ENCODE measurements at regions of chr11 and their contacts with region 1.

Region 1: GRCh38 chr11:62665075-62665598 is at the starts of genes C11orf98 and CSKMT:
- DNase-seq: peak; percentile 97
- H3K4me3 Mint-ChIP-seq: peak within 1 kb of the TSS; percentile 98
- H3K27ac Mint-ChIP-seq: peak within 1 kb of the TSS; percentile 97
- H3K4me1 Mint-ChIP-seq: peaks cover 40% of the 10 kb centered on the region
- H3K27me3 Mint-ChIP-seq: no peaks in the 10 kb centered on the region
- total RNA-seq, gene C11orf98: 107 to 110 TPM
- total RNA-seq, gene CSKMT: 27.7 to 33.9 TPM

Region 2: GRCh38 chr11:62195945-62196344 is 469.2 kb before region 1 on chr11:
- CTCF ChIA-PET with region 1: no interaction called
- POLR2A ChIA-PET with region 1: no interaction called
- intact Hi-C with region 1: no loop called
- DNase-seq: no peak
- H3K4me3 Mint-ChIP-seq: no peak overlapping the region
- H3K27ac Mint-ChIP-seq: no peak overlapping the region
- H3K4me1 Mint-ChIP-seq: no peaks in the 10 kb centered on the region
- H3K27me3 Mint-ChIP-seq: peaks cover 31% of the 10 kb centered on the region

Region 3: GRCh38 chr11:62556108-62556871 is 108.8 kb before region 1 on chr11:
- CTCF ChIA-PET with region 1: interaction called, 4 read pairs
- POLR2A ChIA-PET with region 1: interaction called, 10 read pairs
- intact Hi-C with region 1: no loop called
- DNase-seq: peak; percentile 94
- H3K4me3 Mint-ChIP-seq: peak overlapping the region; percentile 59
- H3K27ac Mint-ChIP-seq: peak overlapping the region; percentile 96
- H3K4me1 Mint-ChIP-seq: peaks cover 96% of the 10 kb centered on the region
- H3K27me3 Mint-ChIP-seq: peaks cover 2% of the 10 kb centered on the region

Region 4: GRCh38 chr11:62580959-62581715 is 84.0 kb before region 1 on chr11:
- CTCF ChIA-PET with region 1: no interaction called
- POLR2A ChIA-PET with region 1: no interaction called
- intact Hi-C with region 1: no loop called
- DNase-seq: no peak
- H3K4me3 Mint-ChIP-seq: no peak overlapping the region
- H3K27ac Mint-ChIP-seq: no peak overlapping the region
- H3K4me1 Mint-ChIP-seq: peaks cover 2% of the 10 kb centered on the region
- H3K27me3 Mint-ChIP-seq: no peaks in the 10 kb centered on the region

Region 5: DNA sequence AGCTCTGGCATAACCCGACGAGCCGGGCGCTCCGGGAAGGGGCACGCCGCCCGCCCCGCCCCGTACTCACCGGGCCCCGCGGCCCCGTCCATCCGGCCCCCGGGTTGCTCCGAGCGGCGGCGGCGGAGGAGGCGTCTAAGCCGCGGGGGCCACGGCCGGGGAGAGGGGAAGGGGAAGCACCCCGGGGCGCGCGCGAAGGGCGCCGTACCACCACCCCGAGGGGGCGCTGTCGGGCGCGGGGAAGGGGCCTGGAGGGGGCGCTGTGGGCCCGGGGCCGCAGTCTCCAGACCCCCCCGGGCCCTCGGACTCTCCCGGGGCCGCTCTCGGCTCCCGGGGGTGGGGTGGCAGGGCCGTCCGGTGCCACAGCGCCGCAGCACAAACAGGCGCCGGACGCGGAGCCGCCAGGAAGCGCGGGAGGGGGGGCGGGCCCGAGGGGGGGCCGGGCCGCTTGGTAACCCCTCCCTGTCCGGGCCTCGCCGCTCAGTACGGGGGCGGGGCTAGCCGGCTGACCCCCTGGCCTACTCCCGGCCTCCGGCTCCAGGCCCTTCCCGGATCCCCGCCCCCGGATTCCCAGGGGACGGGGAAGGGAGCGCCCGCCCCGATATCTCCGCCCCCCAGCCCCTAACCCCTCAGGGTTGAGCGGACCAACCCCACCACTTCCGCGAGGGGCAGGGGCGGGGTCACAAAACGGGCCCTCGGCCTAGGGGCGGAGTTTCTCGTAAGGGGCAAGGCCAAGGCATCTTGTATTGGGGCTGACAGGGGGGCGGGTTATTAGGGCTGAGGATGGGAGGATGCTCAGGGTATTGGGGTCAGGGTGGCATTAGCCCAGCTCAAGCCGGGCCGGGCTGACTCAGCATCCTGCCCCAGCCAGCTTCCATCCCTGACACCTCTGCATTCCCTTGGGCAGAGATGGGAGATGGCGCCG is 52.5 kb before region 1 on chr11 and contains the starts of genes EML3 and ROM1:
- CTCF ChIA-PET with region 1: interaction called, 11 read pairs
- POLR2A ChIA-PET with region 1: interaction called, 7 read pairs
- intact Hi-C with region 1: loop called (anchors 2 kb)
- DNase-seq: peak; percentile 90
- H3K4me3 Mint-ChIP-seq: peak within 1 kb of the TSS; percentile 90
- H3K27ac Mint-ChIP-seq: peak within 1 kb of the TSS; percentile 95
- H3K4me1 Mint-ChIP-seq: peaks cover 45% of the 10 kb centered on the region
- H3K27me3 Mint-ChIP-seq: no peaks in the 10 kb centered on the region
- total RNA-seq, gene EML3: 113 to 116 TPM
- total RNA-seq, gene ROM1: 1.1 to 1.5 TPM

Region 6: GRCh38 chr11:62652161-62653006 is 12.8 kb before region 1 on chr11:
- CTCF ChIA-PET with region 1: interaction called, 6 read pairs
- POLR2A ChIA-PET with region 1: interaction called, 71 read pairs
- intact Hi-C with region 1: loop called (anchors 1 kb)
- DNase-seq: peak; percentile 59
- H3K4me3 Mint-ChIP-seq: peak overlapping the region; percentile 85
- H3K27ac Mint-ChIP-seq: peak overlapping the region; percentile 81
- H3K4me1 Mint-ChIP-seq: peaks cover 22% of the 10 kb centered on the region
- H3K27me3 Mint-ChIP-seq: no peaks in the 10 kb centered on the region

Region 7: GRCh38 chr11:62726915-62727763 is 62.0 kb after region 1 on chr11 and contains the start of gene HNRNPUL2:
- CTCF ChIA-PET with region 1: interaction called, 8 read pairs
- POLR2A ChIA-PET with region 1: interaction called, 12 read pairs
- intact Hi-C with region 1: loop called (anchors 2 kb)
- DNase-seq: peak; percentile 99
- H3K4me3 Mint-ChIP-seq: peak within 1 kb of the TSS; percentile 99
- H3K27ac Mint-ChIP-seq: peak within 1 kb of the TSS; percentile 93
- H3K4me1 Mint-ChIP-seq: peaks cover 44% of the 10 kb centered on the region
- H3K27me3 Mint-ChIP-seq: no peaks in the 10 kb centered on the region
- total RNA-seq, gene HNRNPUL2: 56.0 to 62.3 TPM

Region 8: GRCh38 chr11:62747475-62748160 is 82.5 kb after region 1 on chr11:
- CTCF ChIA-PET with region 1: no interaction called
- POLR2A ChIA-PET with region 1: no interaction called
- intact Hi-C with region 1: no loop called
- DNase-seq: no peak
- H3K4me3 Mint-ChIP-seq: no peak overlapping the region
- H3K27ac Mint-ChIP-seq: no peak overlapping the region
- H3K4me1 Mint-ChIP-seq: peaks cover 16% of the 10 kb centered on the region
- H3K27me3 Mint-ChIP-seq: no peaks in the 10 kb centered on the region

Region 9: GRCh38 chr11:62855571-62856332 is 190.6 kb after region 1 on chr11:
- CTCF ChIA-PET with region 1: no interaction called
- POLR2A ChIA-PET with region 1: interaction called, 43 read pairs
- intact Hi-C with region 1: no loop called
- DNase-seq: peak; percentile 99
- H3K4me3 Mint-ChIP-seq: peak overlapping the region; percentile 95
- H3K27ac Mint-ChIP-seq: peak overlapping the region; percentile 94
- H3K4me1 Mint-ChIP-seq: peaks cover 57% of the 10 kb centered on the region
- H3K27me3 Mint-ChIP-seq: peaks cover 3% of the 10 kb centered on the region

Region 10: GRCh38 chr11:62980133-62980760 is 315.1 kb after region 1 on chr11:
- CTCF ChIA-PET with region 1: no interaction called
- POLR2A ChIA-PET with region 1: no interaction called
- intact Hi-C with region 1: no loop called
- DNase-seq: peak; percentile 13
- H3K4me3 Mint-ChIP-seq: no peak overlapping the region
- H3K27ac Mint-ChIP-seq: no peak overlapping the region
- H3K4me1 Mint-ChIP-seq: no peaks in the 10 kb centered on the region
- H3K27me3 Mint-ChIP-seq: peaks cover 10% of the 10 kb centered on the region